ENCODE measurements at regions of chr1 and their contacts with region 1.

Region 1: DNA sequence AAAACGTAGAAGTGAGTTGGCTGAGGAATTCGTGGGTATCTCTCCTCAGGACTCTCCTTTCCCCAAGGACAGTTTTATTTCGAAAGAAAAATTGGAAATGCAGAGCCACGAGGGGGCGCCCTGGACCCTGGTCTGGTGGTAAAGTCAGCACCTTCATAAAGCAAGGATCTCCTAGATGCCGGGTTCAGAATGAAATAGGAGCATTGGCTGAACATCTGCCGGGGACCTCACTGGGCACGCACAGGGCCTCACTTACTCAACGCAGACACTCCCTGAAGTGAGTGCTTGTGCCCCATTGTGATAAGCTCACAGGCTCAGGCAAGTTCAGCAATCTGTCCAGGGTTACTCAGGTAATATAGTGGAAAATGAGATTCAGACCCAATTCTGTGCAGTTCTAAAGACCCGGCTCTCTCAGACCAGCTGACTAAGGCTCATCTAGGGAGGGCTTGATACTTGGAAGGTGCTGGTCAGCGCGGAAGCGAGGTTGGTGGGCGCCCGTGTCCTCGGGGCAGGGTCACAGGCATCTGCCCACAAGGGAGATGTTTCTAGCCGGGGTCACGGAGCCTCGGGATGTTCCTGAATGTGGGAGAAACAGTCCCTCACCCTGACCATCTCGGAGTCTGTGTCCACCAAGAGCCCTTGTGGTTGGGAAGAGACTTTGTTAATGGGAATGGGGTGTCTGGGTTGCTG is 55.7 kb upstream of the ETV3 start:
- DNase-seq: peak; percentile 66 to 67
- ATAC-seq: peak; percentile 40 to 77
- H3K4me3 ChIP-seq: no peak overlapping the region
- H3K27ac ChIP-seq: no peak overlapping the region
- H3K4me1 ChIP-seq: no peaks in the 10 kb centered on the region
- CTCF ChIP-seq: peak; percentile 84
- EP300 ChIP-seq: no peak
- POLR2A ChIP-seq: no peak
- RAD21 ChIP-seq: peak; percentile 61 to 63

Region 2: GRCh38 chr1:156627313-156627880 is 566.5 kb before region 1 on chr1:
- CTCF ChIA-PET with region 1: no interaction called
- POLR2A ChIA-PET with region 1: no interaction called
- DNase-seq: peak; percentile 57 to 68
- ATAC-seq: peak; percentile 23 to 28; a peak in 4 of 6 replicates
- H3K4me3 ChIP-seq: no peak overlapping the region
- H3K27ac ChIP-seq: no peak overlapping the region
- H3K4me1 ChIP-seq: peaks cover 12% of the 10 kb centered on the region
- CTCF ChIP-seq: peak; percentile 70
- EP300 ChIP-seq: no peak
- POLR2A ChIP-seq: no peak
- RAD21 ChIP-seq: peak; percentile 41 to 65; a peak in 3 of 5 replicates

Region 3: GRCh38 chr1:157176591-157177121 is 17.2 kb before region 1 on chr1:
- CTCF ChIA-PET with region 1: interaction called, 15 read pairs
- POLR2A ChIA-PET with region 1: no interaction called
- DNase-seq: no peak
- ATAC-seq: no peak
- H3K4me3 ChIP-seq: no peak overlapping the region
- H3K27ac ChIP-seq: no peak overlapping the region
- H3K4me1 ChIP-seq: no peaks in the 10 kb centered on the region
- CTCF ChIP-seq: no peak
- EP300 ChIP-seq: no peak
- POLR2A ChIP-seq: no peak
- RAD21 ChIP-seq: no peak

Region 4: DNA sequence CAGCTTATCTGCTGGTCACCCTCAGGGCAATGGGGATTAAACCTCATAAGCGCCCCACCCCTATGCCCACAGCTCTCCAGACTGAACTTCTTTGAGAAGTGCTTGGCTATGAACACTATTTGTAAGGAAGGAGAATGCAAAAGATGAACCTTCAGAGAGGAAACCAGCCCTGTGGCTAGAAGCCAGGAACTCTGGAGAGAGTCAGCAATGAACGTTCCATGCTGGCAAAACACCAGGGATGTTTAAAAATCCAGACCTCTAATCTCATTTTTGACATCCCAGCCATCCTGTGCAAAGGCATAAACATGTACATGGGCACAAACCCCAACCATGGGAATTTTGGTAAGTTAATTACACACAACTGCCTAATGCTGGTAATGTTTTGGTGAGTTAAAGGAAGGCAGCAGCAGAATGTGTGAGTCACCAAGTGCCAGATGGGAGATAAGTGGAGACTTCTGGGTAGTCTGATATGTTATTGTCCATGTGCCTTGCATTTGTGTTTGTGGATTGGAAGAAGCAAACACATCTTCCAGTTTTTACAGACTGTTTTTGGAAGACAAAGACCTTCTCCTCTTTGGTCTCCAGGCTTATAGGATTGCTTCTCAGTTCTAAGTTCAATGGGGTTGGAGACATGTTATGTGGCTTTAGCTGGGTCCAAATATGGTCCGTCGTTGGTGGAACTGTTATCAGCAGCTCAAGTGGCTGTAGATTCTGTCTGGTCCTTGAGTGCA is 118.4 kb after region 1 on chr1:
- CTCF ChIA-PET with region 1: interaction called, 13 read pairs
- POLR2A ChIA-PET with region 1: no interaction called
- DNase-seq: no peak
- ATAC-seq: no peak
- H3K4me3 ChIP-seq: no peak overlapping the region
- H3K27ac ChIP-seq: no peak overlapping the region
- H3K4me1 ChIP-seq: no peaks in the 10 kb centered on the region
- CTCF ChIP-seq: no peak
- EP300 ChIP-seq: no peak
- POLR2A ChIP-seq: no peak
- RAD21 ChIP-seq: no peak

Region 5: DNA sequence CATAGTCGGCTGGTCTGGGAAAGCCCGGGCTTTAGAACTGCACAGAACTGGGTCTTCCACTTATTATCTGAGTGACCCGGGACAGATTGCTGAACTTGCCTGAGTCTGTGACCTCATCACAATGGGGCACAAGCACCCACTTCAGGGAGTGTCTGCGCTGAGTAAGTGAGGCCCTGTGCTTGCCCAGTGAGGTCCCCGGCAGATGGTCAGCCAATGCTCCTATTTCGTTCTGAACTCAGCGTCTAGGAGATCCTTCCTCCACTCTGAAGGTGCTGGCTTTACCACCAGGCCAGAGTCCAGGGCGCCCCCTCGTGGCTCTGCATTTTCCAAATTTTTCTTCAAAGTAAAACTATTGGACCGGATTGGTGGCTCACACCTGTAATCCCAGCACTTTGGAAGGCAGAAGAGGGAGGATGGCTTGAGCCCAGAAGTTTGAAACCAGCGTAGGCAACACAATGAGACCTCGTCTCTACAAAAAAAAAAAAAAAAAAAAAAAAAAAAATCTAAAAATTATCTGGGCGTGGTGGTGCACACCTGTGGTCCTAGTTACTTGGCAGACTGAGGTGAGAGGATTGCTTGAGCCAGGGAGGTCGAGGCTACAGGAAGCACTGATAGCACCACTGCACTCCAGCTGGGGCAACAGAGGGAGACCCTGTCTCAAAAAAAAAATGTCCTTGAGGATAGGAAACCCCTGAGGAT is 296.8 kb after region 1 on chr1:
- CTCF ChIA-PET with region 1: interaction called, 38 read pairs
- POLR2A ChIA-PET with region 1: no interaction called
- DNase-seq: peak; percentile 33 to 60
- ATAC-seq: peak; percentile 60 to 86
- H3K4me3 ChIP-seq: no peak overlapping the region
- H3K27ac ChIP-seq: no peak overlapping the region
- H3K4me1 ChIP-seq: no peaks in the 10 kb centered on the region
- CTCF ChIP-seq: peak; percentile 60
- EP300 ChIP-seq: no peak
- POLR2A ChIP-seq: no peak
- RAD21 ChIP-seq: peak; percentile 44 to 53

Region 6: GRCh38 chr1:157496121-157496526 is 302.3 kb after region 1 on chr1:
- CTCF ChIA-PET with region 1: interaction called, 38 read pairs
- POLR2A ChIA-PET with region 1: no interaction called
- DNase-seq: peak in 1 of 2 experiments; percentile 43
- ATAC-seq: peak; percentile 72 to 92
- H3K4me3 ChIP-seq: no peak overlapping the region
- H3K27ac ChIP-seq: no peak overlapping the region
- H3K4me1 ChIP-seq: no peaks in the 10 kb centered on the region
- CTCF ChIP-seq: peak; percentile 62
- EP300 ChIP-seq: no peak
- POLR2A ChIP-seq: no peak
- RAD21 ChIP-seq: peak; percentile 43 to 48; a peak in 3 of 5 replicates